GM12878 (cell line): ENCODE measurements at regions of chr6 and their contacts with region 1.

Region 1: DNA sequence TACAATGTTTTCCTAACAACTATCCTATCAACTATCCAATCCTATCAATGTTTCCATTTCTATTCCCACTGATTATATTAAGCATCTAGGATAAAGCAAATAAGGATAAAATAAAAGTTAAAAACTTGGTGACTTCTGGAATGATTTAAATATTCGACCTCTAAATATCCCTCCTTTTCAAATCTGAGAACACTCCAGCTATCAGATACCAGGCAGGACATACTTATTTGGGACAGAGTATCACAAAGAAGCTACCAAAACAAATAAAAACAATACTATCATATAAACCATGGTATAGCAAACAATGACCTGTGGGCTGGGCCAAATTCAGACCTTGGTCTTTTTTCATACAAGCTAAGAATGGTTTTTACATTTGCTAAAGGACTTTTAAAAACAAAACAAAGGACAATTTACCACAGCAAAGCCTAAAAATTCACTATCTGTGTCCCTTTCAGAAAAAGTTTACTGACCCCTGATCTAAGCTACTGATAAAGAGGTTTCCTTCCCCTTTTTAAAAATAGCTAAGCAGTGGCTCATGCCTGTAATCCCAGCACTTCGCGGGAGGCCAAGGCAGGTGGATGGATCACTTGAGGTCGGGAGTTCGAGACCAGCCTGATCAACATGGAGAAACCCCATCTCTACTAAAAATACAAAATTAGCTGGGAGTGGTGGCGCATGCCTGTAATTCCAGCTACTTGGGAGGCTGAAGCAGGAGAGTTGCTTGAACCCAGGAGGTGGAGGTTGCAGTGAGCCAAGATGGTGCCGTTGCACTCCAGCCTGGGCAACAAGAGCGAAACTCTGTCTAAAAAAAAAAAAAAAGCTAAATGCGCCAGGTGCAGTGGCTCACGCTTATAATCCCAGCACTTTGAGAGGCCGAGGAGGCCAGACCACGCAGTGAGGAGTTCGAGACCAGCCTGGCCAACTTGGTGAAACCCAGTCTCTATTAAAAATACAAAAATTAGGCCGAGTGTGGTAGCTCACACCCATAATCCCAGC is 6.0 kb downstream of the NUP153 start:
- DNase-seq: no peak
- ATAC-seq: no peak
- H3K4me3 ChIP-seq: peak overlapping the region; percentile 43; the same call in 1 of the 2 replicates
- H3K27ac ChIP-seq: peak overlapping the region; percentile 9; the same call in 1 of the 2 replicates
- H3K4me1 ChIP-seq: peaks cover 2% of the 10 kb centered on the region; the same call in 1 of the 2 replicates
- H3K27me3 ChIP-seq: no peaks in the 10 kb centered on the region
- CTCF ChIP-seq: no peak
- EP300 ChIP-seq: no peak
- POLR2A ChIP-seq: no peak
- RAD21 ChIP-seq: no peak

Region 2: GRCh38 chr6:17542243-17542642 is 158.5 kb before region 1 on chr6:
- CTCF ChIA-PET with region 1: no interaction called
- POLR2A ChIA-PET with region 1: no interaction called
- RAD21 ChIA-PET with region 1: no interaction called
- SMC1A ChIA-PET with region 1: no interaction called
- in situ Hi-C with region 1: no loop called
- intact Hi-C with region 1: no loop called
- DNase-seq: no peak
- ATAC-seq: no peak
- H3K4me3 ChIP-seq: no peak overlapping the region
- H3K27ac ChIP-seq: no peak overlapping the region
- H3K4me1 ChIP-seq: no peaks in the 10 kb centered on the region
- H3K27me3 ChIP-seq: no peaks in the 10 kb centered on the region
- CTCF ChIP-seq: no peak
- EP300 ChIP-seq: no peak
- POLR2A ChIP-seq: no peak
- RAD21 ChIP-seq: no peak

Region 3: DNA sequence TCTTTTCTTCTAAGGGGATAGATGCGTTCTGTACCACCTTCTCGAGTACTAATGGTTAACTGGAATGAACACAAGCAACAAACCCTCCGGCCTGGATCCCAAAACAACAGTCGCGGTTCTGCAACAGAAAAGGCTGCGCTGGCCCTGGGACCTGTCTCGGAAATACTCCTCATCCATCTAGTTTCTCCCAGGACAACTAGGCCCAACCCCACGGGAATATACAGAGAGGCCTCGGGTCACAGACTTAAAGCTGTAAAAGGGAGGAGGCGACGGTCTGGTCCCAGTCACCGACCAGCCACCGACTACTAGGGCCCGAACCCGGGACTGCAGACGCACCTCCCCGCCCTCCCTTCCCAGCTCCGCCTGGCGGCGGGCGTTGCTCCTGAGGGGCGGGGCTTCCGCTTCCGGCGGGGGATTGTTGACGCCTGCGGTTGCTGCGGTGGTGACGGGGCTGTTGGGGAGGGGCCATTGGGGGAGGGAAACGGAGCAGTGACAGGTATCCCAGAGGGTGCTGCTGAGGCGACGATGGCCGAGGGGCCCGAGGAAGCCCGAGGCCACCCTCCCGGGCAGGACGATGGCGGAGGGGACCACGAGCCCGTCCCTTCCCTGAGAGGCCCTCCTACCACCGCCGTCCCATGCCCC is 100.7 kb before region 1 on chr6 and contains the start of gene FAM8A1:
- CTCF ChIA-PET with region 1: interaction called, 24 read pairs
- POLR2A ChIA-PET with region 1: interaction called, 12 read pairs
- RAD21 ChIA-PET with region 1: interaction called, 13 read pairs
- SMC1A ChIA-PET with region 1: interaction called, 7 read pairs
- in situ Hi-C with region 1: no loop called
- intact Hi-C with region 1: no loop called
- DNase-seq: peak; percentile 66
- ATAC-seq: peak; percentile 90
- H3K4me3 ChIP-seq: peak within 1 kb of the TSS; percentile 95
- H3K27ac ChIP-seq: peak within 1 kb of the TSS; percentile 72
- H3K4me1 ChIP-seq: no peaks in the 10 kb centered on the region; the same call in 1 of the 2 replicates
- H3K27me3 ChIP-seq: no peaks in the 10 kb centered on the region
- CTCF ChIP-seq: peak in 2 of 3 experiments; percentile 23 to 51; a peak in 2 of 6 replicates
- EP300 ChIP-seq: peak in 1 of 2 experiments; percentile 35; a peak in 1 of 4 replicates
- POLR2A ChIP-seq: peak; percentile 76
- RAD21 ChIP-seq: no peak
- polyA plus RNA-seq, gene FAM8A1: 1.4 to 1.5 TPM

Region 4: GRCh38 chr6:17714879-17715851 is 14.4 kb after region 1 on chr6:
- CTCF ChIA-PET with region 1: interaction called, 12 read pairs
- POLR2A ChIA-PET with region 1: interaction called, 7 read pairs
- RAD21 ChIA-PET with region 1: interaction called, 7 read pairs
- SMC1A ChIA-PET with region 1: interaction called, 29 read pairs
- in situ Hi-C with region 1: no loop called
- intact Hi-C with region 1: no loop called
- DNase-seq: no peak
- ATAC-seq: peak; percentile 91
- H3K4me3 ChIP-seq: no peak overlapping the region
- H3K27ac ChIP-seq: no peak overlapping the region
- H3K4me1 ChIP-seq: peaks cover 5% of the 10 kb centered on the region; the same call in 1 of the 2 replicates
- H3K27me3 ChIP-seq: no peaks in the 10 kb centered on the region
- CTCF ChIP-seq: no peak
- EP300 ChIP-seq: no peak
- POLR2A ChIP-seq: no peak
- RAD21 ChIP-seq: no peak

Region 5: GRCh38 chr6:17803409-17803808 is 102.7 kb after region 1 on chr6:
- CTCF ChIA-PET with region 1: interaction called, 37 read pairs
- POLR2A ChIA-PET with region 1: interaction called, 3 read pairs
- RAD21 ChIA-PET with region 1: interaction called, 9 read pairs
- SMC1A ChIA-PET with region 1: interaction called, 16 read pairs
- in situ Hi-C with region 1: no loop called
- intact Hi-C with region 1: loop called (anchors 2 kb)
- DNase-seq: no peak
- ATAC-seq: no peak
- H3K4me3 ChIP-seq: no peak overlapping the region
- H3K27ac ChIP-seq: no peak overlapping the region
- H3K4me1 ChIP-seq: no peaks in the 10 kb centered on the region
- H3K27me3 ChIP-seq: no peaks in the 10 kb centered on the region
- CTCF ChIP-seq: no peak
- EP300 ChIP-seq: no peak
- POLR2A ChIP-seq: no peak
- RAD21 ChIP-seq: no peak

Region 6: DNA sequence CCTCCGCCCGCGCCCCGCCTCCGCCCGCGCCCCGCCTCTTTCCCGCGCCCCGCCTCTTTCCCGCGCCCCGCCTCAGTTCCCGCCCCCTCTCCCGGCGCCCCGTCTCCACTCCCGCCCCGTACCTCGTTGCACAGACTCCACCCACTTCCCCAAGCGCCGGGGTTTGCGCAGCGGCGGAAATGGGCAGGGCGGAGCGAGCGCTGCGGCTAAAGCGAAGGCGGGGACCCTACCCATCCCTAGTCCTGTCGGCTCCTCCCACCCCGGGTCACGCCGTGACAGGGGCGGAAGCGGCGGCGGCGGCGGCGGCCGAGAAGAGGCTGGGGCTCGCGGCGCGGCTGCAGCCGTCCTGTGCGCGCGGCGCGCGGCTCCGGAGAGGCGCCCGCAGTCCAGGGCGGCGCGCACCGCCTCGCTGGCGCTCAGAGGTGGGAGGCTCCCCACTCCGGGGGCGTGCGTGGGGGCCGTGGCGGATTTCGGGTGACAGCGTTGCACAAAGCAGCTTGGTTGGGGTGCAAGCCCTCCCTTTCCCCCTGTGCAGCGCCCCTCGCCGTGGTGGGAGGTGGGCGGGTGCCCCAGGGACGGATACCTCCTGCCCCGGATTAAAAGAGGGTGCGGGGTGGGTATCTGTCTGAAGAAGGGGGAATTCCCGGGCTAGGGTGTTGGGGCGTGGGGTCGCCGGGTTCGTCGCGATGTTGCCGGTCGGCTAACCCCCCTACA is 454.6 kb after region 1 on chr6 and contains the start of gene KDM1B:
- CTCF ChIA-PET with region 1: interaction called, 3 read pairs
- POLR2A ChIA-PET with region 1: no interaction called
- RAD21 ChIA-PET with region 1: interaction called, 3 read pairs
- SMC1A ChIA-PET with region 1: no interaction called
- in situ Hi-C with region 1: loop called (anchors 5 kb)
- intact Hi-C with region 1: loop called (anchors 10 kb)
- DNase-seq: peak; percentile 86
- ATAC-seq: peak; percentile 90
- H3K4me3 ChIP-seq: peak within 1 kb of the TSS; percentile 85
- H3K27ac ChIP-seq: peak within 1 kb of the TSS; percentile 81
- H3K4me1 ChIP-seq: peaks cover 9% of the 10 kb centered on the region
- H3K27me3 ChIP-seq: no peaks in the 10 kb centered on the region
- CTCF ChIP-seq: no peak
- EP300 ChIP-seq: no peak
- POLR2A ChIP-seq: peak; percentile 79
- RAD21 ChIP-seq: no peak
- polyA plus RNA-seq, gene KDM1B: 1.7 to 2.9 TPM